Right lobe of liver (tissue), 6 donors: ENCODE measurements at regions of chr7 and their contacts with region 1.

Region 1: DNA sequence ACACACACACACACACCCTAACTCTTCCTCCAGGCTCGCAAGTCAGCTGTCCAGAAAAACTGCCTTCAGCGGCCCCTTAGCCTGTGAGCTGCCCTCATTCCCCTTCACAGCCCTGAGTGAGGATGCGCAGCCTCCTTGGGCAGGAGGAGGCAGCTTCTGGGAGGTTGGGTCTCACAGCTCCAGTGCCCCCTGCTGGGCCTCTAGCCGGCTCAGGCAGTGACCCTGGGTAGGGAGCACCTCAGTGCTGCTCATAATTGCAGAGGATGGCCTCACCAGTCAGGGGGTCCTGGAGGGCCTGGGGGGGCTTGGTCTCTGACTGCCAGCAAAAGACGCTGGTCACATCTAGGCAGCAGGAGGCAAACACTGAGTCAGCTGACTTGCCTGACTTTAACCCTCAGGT is 43.7 kb downstream of the ZNF273 start:
- DNase-seq: peak in 1 of 3 donors; percentile 27
- ATAC-seq: peak in 3 of 4 donors; percentile 17 to 32 (median 28)
- H3K4me3 ChIP-seq: no peak overlapping the region
- H3K27ac ChIP-seq: no peak overlapping the region
- H3K4me1 ChIP-seq: peaks cover 0 to 10% (median 0%) of the 10 kb centered on the region in 4 donors
- H3K27me3 ChIP-seq: peaks cover 0 to 4% of the 10 kb centered on the region in 2 donors
- CTCF ChIP-seq: no peak
- POLR2A ChIP-seq: no peak

Region 2: GRCh38 chr7:65006094-65006992 is 59.6 kb after region 1 on chr7 and contains the start of gene ERV3-1:
- intact Hi-C with region 1: no loop called
- DNase-seq: peak; percentile 94 to 97 (median 97)
- ATAC-seq: peak; percentile 99 to 100 (median 100)
- H3K4me3 ChIP-seq: peak within 1 kb of the TSS; percentile 66 to 81 (median 70)
- H3K27ac ChIP-seq: peak within 1 kb of the TSS; percentile 57 to 85 (median 80)
- H3K4me1 ChIP-seq: peaks cover 0 to 24% (median 10%) of the 10 kb centered on the region in 4 donors
- H3K27me3 ChIP-seq: no peaks in the 10 kb centered on the region
- CTCF ChIP-seq: no peak
- POLR2A ChIP-seq: peak; percentile 96
- total RNA-seq, gene ERV3-1: 4.2 to 5.3 (median 4.9) TPM

Region 3: DNA sequence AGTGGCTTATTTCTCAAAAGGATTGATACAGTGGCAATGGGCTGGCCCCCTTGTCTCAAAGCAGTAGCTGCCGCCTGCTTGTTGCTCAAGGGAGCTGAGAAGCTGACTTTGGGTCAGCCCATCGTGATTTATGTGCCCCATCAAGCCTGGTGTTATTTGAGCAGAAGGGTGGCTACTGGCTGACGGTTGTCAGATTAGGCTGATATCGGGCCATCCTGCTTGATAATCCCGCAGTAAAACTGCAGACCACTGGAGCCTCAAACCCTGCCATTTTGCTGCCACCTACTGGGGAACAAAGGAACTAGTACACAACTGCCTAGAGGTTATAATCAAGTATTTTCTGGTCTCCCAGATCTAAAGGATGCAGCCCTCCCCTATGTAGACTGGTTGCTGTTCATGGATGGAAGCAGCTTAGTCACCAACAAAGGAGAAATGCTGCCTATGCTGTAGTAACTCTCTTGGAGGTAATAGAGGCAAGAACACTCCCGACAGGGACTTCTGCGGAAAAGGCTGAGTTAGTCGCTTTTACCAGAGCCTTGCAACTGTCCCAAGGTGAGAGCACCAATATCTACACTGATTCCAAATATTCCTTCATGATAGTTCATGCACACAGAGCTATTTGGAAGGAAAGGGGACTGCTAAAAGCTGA is 361.0 kb after region 1 on chr7:
- intact Hi-C with region 1: loop called in 1 of 2 experiments (anchors 10 kb)
- DNase-seq: no peak
- ATAC-seq: peak; percentile 61 to 82 (median 70)
- H3K4me3 ChIP-seq: no peak overlapping the region
- H3K27ac ChIP-seq: no peak overlapping the region
- H3K4me1 ChIP-seq: peaks cover 0 to 13% (median 3%) of the 10 kb centered on the region in 4 donors
- H3K27me3 ChIP-seq: no peaks in the 10 kb centered on the region
- CTCF ChIP-seq: peak; percentile 49 to 75 (median 63)
- POLR2A ChIP-seq: no peak